ENCODE measurements at regions of chr6 and their contacts with region 1.

Region 1: GRCh38 chr6:169831450-169832246 is 80.2 kb downstream of the ERMARD start:
- DNase-seq: peak; percentile 40
- H3K4me3 ChIP-seq: no peak overlapping the region
- H3K27ac ChIP-seq: no peak overlapping the region
- H3K4me1 ChIP-seq: peaks cover 20% of the 10 kb centered on the region
- H3K27me3 ChIP-seq: no peaks in the 10 kb centered on the region
- CTCF ChIP-seq: peak; percentile 89 to 90

Region 2: DNA sequence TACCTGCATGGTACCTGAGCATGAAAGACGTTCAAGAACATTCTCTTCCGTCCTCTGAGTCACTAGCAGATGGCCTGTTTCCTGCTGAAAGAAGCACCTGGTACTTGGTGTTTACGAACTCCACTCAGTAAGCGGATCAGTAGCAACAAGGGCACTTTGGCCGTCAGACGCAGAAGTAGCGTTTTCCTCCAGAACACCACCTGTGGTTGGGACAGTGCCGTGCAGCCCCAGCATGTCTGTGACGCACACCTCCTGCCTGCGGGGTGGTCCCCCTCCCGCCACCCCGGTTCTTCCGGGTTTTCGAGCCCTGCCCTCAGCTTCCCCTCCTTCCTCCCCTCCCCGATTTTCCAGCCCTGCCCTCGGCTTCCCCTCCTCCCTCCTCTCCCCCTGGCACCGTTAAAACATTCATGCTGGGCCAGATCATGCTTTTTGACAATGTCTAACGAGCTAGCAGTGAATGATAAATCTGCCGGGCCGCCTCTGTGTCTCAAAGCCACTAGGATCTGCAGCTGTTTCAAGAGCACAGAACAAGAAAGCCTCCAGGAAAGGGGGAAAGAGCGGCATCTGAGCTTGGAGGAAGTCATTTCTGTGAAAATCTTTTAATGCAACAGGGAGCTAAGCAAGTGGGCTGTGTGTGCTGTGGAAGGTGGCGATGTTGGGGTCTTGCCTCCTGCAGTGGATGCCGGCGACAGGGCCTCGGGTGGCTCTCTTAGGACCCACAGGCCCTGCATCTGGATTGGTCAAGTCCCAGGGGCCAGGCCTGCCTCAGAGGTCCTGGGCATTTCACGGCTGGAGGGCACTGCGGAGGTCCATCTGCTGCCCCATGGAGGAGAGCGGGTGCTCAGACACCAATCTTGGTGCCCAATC is 127.7 kb after region 1 on chr6:
- CTCF ChIA-PET with region 1: no interaction called
- dilution Hi-C with region 1: loop called (anchors 10 kb)
- in situ Hi-C with region 1: no loop called
- intact Hi-C with region 1: no loop called
- DNase-seq: no peak
- H3K4me3 ChIP-seq: no peak overlapping the region
- H3K27ac ChIP-seq: no peak overlapping the region
- H3K4me1 ChIP-seq: no peaks in the 10 kb centered on the region
- H3K27me3 ChIP-seq: no peaks in the 10 kb centered on the region
- CTCF ChIP-seq: peak in 1 of 2 donors; percentile 4

Region 3: DNA sequence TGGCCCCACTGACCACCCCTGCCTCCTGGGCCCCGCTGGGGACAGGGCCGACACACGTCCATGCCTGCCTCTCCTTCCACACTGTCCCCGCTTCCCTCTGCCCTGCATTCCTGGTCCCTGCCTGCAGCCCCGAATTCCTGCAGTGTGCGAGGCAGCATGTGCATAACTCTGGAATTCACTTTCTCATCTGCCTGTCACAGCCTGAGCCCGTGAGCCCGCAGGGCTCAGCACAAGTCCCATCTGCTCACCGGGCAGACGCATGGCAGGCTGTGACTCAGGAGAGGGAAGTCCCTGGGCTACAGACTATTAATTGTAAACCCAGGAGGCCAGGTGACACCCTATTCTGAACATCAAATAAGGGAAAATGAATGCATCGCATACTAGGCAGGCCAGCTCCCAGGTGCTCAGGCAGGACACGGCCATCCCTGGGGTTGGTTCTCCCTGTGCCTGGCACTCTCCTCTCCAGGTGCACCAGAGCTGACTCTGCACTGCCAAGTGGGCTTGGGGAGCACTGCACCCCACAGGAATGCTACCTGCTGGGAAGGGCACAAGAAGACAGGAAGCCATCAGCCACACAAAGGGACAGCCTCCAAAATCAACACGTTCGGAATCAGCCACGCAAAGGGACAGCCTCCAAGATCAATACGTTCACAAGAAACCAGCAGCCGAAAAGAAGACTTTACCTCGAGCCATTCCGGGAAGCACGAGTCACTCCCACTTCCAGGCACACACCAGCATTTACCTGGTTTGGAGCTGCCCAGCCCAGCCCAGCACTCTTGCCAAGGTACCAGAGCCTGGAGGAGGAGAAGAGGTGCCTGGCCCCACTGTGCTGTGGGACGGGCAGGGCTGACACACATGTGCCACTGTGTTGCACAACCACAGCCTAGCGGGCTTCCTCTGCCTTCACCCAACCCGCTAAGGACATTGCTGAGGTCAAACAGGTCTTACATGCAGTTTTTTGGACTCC is 393.3 kb after region 1 on chr6:
- CTCF ChIA-PET with region 1: interaction called, 3 read pairs
- dilution Hi-C with region 1: no loop called
- in situ Hi-C with region 1: no loop called
- intact Hi-C with region 1: loop called (anchors 5 kb)
- DNase-seq: peak; percentile 98
- H3K4me3 ChIP-seq: peak overlapping the region in 1 of 3 experiments; percentile 14
- H3K27ac ChIP-seq: peak overlapping the region; percentile 92
- H3K4me1 ChIP-seq: peaks cover 58% of the 10 kb centered on the region
- H3K27me3 ChIP-seq: no peaks in the 10 kb centered on the region
- CTCF ChIP-seq: peak; percentile 13 to 15

Region 4: GRCh38 chr6:170235427-170236125 is 403.9 kb after region 1 on chr6:
- CTCF ChIA-PET with region 1: no interaction called
- dilution Hi-C with region 1: no loop called
- in situ Hi-C with region 1: no loop called
- intact Hi-C with region 1: no loop called
- DNase-seq: no peak
- H3K4me3 ChIP-seq: no peak overlapping the region
- H3K27ac ChIP-seq: no peak overlapping the region
- H3K4me1 ChIP-seq: peaks cover 16% of the 10 kb centered on the region
- H3K27me3 ChIP-seq: no peaks in the 10 kb centered on the region
- CTCF ChIP-seq: no peak

Region 5: DNA sequence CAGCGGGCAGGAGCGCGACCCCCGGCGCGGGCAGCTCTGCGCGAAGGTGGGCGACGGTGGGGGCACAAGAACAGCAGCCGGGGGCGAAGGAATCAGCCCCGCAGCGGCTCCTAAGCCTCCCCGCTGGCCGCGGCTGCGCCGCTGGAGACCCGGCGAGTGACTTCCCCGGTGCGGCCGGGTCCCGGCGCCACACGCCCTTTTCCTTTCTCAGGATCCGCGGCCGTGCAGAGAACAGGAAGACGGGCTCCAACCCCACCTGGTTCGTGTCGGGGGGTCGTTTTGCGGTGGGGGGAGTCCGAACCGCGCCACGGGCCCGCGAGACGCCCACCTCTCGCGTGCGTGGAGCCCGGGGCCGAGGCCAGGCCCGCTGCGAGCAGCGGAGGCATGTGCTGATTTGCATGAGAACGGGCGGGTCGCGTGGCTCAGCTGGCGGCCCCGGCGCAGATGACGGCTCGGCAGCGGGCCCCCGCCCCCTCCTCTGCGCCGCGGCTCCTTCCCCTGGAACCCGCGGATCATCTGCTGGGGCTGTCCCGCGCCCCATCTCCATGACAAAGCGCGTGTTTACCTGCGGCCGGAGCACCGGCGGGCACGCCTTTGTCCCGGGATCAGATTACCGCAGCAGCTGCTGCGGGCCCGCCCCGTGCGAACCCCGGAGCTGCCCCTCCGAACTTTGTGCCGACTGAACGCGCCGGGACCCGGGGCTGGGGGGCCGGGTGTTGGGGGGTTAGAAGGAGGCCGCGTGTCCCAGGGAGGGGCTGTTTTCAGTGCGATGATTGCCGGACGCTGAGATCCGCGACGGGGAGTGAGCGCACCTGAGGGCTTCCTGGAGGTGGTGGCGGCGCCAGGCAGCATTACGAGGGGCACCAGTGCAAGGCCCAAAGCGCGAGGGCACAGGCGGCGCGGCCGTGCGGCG is 464.1 kb after region 1 on chr6:
- CTCF ChIA-PET with region 1: interaction called, 21 read pairs
- dilution Hi-C with region 1: no loop called
- in situ Hi-C with region 1: loop called in 1 of 2 experiments (anchors 25 kb)
- intact Hi-C with region 1: loop called (anchors 1 kb)
- DNase-seq: peak; percentile 59
- H3K4me3 ChIP-seq: peak overlapping the region; percentile 56 to 64 (median 57)
- H3K27ac ChIP-seq: peak overlapping the region; percentile 9
- H3K4me1 ChIP-seq: peaks cover 28% of the 10 kb centered on the region
- H3K27me3 ChIP-seq: no peaks in the 10 kb centered on the region
- CTCF ChIP-seq: no peak

Region 6: GRCh38 chr6:170516783-170517616 is 685.4 kb after region 1 on chr6:
- CTCF ChIA-PET with region 1: no interaction called
- dilution Hi-C with region 1: no loop called
- in situ Hi-C with region 1: no loop called
- intact Hi-C with region 1: loop called (anchors 1 kb)
- DNase-seq: peak; percentile 68
- H3K4me3 ChIP-seq: no peak overlapping the region
- H3K27ac ChIP-seq: no peak overlapping the region
- H3K4me1 ChIP-seq: no peaks in the 10 kb centered on the region
- H3K27me3 ChIP-seq: no peaks in the 10 kb centered on the region
- CTCF ChIP-seq: peak; percentile 88 to 90

Measured in mammary epithelial cell (primary cell).